A673 (cell line): ENCODE measurements at regions of chr21 and their contacts with region 1.

Region 1: GRCh38 chr21:36698981-36699891 is at the start of gene SIM2:
- DNase-seq: peak; percentile 64
- H3K4me3 ChIP-seq: peak within 1 kb of the TSS; percentile 97
- H3K27ac ChIP-seq: peak within 1 kb of the TSS; percentile 92
- H3K4me1 ChIP-seq: peaks cover 4% of the 10 kb centered on the region
- H3K27me3 ChIP-seq: peaks cover 6% of the 10 kb centered on the region
- CTCF ChIP-seq: no peak
- total RNA-seq, gene SIM2: 42.7 and 49.1 TPM in 2 replicates

Region 2: GRCh38 chr21:36596218-36596617 is 103.0 kb before region 1 on chr21:
- CTCF ChIA-PET with region 1: no interaction called
- POLR2A ChIA-PET with region 1: no interaction called
- intact Hi-C with region 1: no loop called
- DNase-seq: no peak
- H3K4me3 ChIP-seq: no peak overlapping the region
- H3K27ac ChIP-seq: no peak overlapping the region
- H3K4me1 ChIP-seq: no peaks in the 10 kb centered on the region
- H3K27me3 ChIP-seq: no peaks in the 10 kb centered on the region
- CTCF ChIP-seq: no peak

Region 3: GRCh38 chr21:36661511-36662309 is 37.5 kb before region 1 on chr21:
- CTCF ChIA-PET with region 1: no interaction called
- POLR2A ChIA-PET with region 1: no interaction called
- intact Hi-C with region 1: loop called (anchors 5 kb)
- DNase-seq: peak; percentile 55
- H3K4me3 ChIP-seq: no peak overlapping the region
- H3K27ac ChIP-seq: no peak overlapping the region
- H3K4me1 ChIP-seq: peaks cover 30% of the 10 kb centered on the region
- H3K27me3 ChIP-seq: no peaks in the 10 kb centered on the region
- CTCF ChIP-seq: peak; percentile 61